B cell (primary cell): ENCODE measurements at regions of chrX and their contacts with region 1.

Region 1: DNA sequence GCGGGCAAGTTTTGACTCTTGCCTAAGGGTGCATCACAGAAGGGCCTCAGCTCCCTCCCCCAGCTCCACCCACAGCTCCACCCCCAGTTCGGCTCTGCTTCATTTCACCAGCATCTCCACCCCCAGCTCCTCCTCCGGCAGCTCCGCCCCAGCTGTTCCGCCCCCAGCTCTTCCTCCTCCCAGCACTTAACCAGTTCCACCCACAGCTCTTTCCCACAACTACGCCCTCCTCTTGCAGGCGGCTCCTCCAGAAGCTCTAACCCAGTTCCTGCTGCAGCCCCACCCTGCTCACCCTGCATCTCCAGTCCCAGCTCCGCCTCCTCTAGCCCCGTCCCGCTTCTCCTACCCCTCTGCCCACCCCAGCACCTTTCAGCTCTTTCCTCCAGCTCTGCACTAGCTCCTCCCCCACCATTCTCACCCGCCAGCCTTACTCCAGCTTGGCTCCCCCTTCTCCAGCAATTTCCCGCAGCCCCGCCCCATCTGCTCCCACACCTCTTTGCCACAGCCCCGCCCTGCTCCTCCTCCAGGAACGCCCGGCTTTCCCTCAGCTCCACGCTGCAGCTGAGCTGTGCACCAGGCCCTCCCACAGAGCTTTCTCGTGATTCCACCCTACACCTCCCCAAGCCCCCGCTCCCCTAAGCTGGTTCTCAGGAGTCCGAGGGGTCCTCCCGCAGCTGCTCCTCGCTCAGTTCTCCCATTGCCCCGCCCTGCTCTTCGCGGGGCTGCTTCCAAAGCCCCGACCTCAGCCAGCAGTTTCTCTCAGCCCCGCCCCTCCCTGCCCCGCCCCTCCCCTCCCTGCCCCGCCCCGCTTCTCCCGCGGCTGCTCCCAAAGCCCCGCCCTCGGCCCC is 1.3 kb upstream of the EOLA1 start:
- DNase-seq: peak; percentile 91
- ATAC-seq: peak; percentile 51
- H3K4me3 ChIP-seq: peak overlapping the region in 4 of 5 experiments; percentile 54 to 70 (median 60)
- H3K4me3 Mint-ChIP-seq: peak overlapping the region; percentile 89
- H3K27ac ChIP-seq: peak overlapping the region; percentile 64 to 73
- H3K27ac Mint-ChIP-seq: peak overlapping the region; percentile 89
- H3K4me1 ChIP-seq: peaks cover 6 to 13% of the 10 kb centered on the region in 2 donors
- H3K4me1 Mint-ChIP-seq: peaks cover 12% of the 10 kb centered on the region
- H3K27me3 ChIP-seq: no peaks in the 10 kb centered on the region
- H3K27me3 Mint-ChIP-seq: no peaks in the 10 kb centered on the region
- CTCF ChIP-seq: no peak

Region 2: GRCh38 chrX:148984238-148984637 is 555.3 kb before region 1 on chrX:
- CTCF ChIA-PET with region 1: no interaction called
- POLR2A ChIA-PET with region 1: no interaction called
- intact Hi-C with region 1: no loop called
- DNase-seq: no peak
- ATAC-seq: no peak
- H3K4me3 ChIP-seq: no peak overlapping the region
- H3K4me3 Mint-ChIP-seq: no peak overlapping the region
- H3K27ac ChIP-seq: no peak overlapping the region
- H3K27ac Mint-ChIP-seq: no peak overlapping the region
- H3K4me1 ChIP-seq: no peaks in the 10 kb centered on the region
- H3K4me1 Mint-ChIP-seq: peaks cover 3% of the 10 kb centered on the region
- H3K27me3 ChIP-seq: no peaks in the 10 kb centered on the region
- H3K27me3 Mint-ChIP-seq: no peaks in the 10 kb centered on the region
- CTCF ChIP-seq: no peak

Region 3: DNA sequence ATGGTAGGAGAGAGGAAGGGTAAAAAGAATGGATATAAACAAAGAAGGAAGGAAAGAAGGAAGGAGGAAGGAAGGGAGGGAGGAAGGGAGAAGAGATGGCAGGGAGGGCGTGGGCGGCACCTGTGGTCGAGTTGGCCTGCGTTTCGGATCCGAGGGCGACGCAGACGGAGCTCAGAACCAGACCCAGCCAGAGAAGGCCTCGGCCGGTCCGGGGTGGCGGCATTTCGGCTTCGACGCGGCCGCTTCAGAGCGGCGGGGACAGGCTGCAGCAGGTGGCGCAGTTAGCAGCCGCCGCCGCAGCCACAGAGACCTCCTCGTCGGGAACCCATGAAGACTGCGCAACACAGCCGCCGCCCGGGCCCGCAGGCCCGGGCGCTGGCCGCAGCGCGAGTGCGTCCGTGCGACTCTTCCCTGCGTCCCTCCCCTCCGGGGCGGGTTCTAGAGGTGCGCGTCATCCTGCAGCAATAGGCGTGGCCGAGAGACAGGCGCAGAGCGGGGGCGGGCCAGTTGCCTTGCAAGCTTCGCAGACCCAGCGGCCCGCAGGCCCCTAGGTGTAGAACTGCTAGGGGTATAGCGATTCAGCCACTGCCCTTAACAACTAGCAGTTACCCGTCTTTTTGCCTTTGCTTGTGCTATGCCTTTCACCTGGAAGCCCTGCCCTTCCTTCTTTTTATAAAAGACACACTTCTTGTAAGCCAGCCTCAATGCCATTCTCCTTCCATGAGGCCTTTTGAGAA is 34.4 kb before region 1 on chrX and contains the start of gene IDS:
- CTCF ChIA-PET with region 1: interaction called, 20 read pairs
- POLR2A ChIA-PET with region 1: interaction called, 27 read pairs
- intact Hi-C with region 1: loop called (anchors 1 kb)
- DNase-seq: peak; percentile 91
- ATAC-seq: peak; percentile 72
- H3K4me3 ChIP-seq: peak within 1 kb of the TSS; percentile 24 to 81 (median 79)
- H3K4me3 Mint-ChIP-seq: peak within 1 kb of the TSS; percentile 95
- H3K27ac ChIP-seq: peak within 1 kb of the TSS; percentile 95 to 98
- H3K27ac Mint-ChIP-seq: peak within 1 kb of the TSS; percentile 96
- H3K4me1 ChIP-seq: peaks cover 12 to 24% of the 10 kb centered on the region in 2 donors
- H3K4me1 Mint-ChIP-seq: peaks cover 18% of the 10 kb centered on the region
- H3K27me3 ChIP-seq: peaks cover 0 to 5% (median 0%) of the 10 kb centered on the region in 4 experiments
- H3K27me3 Mint-ChIP-seq: peaks cover 2% of the 10 kb centered on the region
- CTCF ChIP-seq: no peak
- total RNA-seq, gene IDS: 169 TPM in 2 replicates

Region 4: GRCh38 chrX:149512225-149512885 is 27.2 kb before region 1 on chrX:
- CTCF ChIA-PET with region 1: interaction called, 20 read pairs
- POLR2A ChIA-PET with region 1: interaction called, 3 read pairs
- intact Hi-C with region 1: no loop called
- DNase-seq: peak; percentile 68
- ATAC-seq: peak; percentile 93
- H3K4me3 ChIP-seq: no peak overlapping the region
- H3K4me3 Mint-ChIP-seq: no peak overlapping the region
- H3K27ac ChIP-seq: no peak overlapping the region
- H3K27ac Mint-ChIP-seq: no peak overlapping the region
- H3K4me1 ChIP-seq: no peaks in the 10 kb centered on the region
- H3K4me1 Mint-ChIP-seq: peaks cover 4% of the 10 kb centered on the region
- H3K27me3 ChIP-seq: peaks cover 0 to 5% (median 0%) of the 10 kb centered on the region in 4 experiments
- H3K27me3 Mint-ChIP-seq: peaks cover 2% of the 10 kb centered on the region
- CTCF ChIP-seq: peak; percentile 59

Region 5: DNA sequence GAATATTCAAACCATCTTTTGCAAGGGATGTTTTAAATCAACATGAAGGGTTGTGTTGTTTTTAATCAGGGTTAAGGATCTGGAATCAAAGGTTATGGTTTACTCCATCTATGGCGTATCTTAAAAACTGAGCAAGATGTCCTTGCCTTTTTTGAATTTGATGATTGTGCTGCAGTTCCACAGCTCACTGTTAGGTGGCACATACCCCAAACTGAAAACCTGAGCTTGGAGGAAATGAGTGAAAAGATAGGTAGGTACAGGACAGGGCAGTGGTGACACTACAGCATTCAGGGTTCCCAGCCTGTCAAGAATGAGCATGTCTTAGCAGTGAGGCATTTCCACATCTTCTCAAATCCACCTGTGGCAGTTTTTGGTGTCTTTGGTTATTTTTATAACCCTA is 11.8 kb before region 1 on chrX:
- CTCF ChIA-PET with region 1: interaction called, 12 read pairs
- POLR2A ChIA-PET with region 1: interaction called, 4 read pairs
- intact Hi-C with region 1: loop called (anchors 1 kb)
- DNase-seq: peak; percentile 56
- ATAC-seq: peak; percentile 25
- H3K4me3 ChIP-seq: no peak overlapping the region
- H3K4me3 Mint-ChIP-seq: peak overlapping the region; percentile 7
- H3K27ac ChIP-seq: no peak overlapping the region
- H3K27ac Mint-ChIP-seq: peak overlapping the region; percentile 44
- H3K4me1 ChIP-seq: peaks cover 4 to 10% of the 10 kb centered on the region in 2 donors
- H3K4me1 Mint-ChIP-seq: peaks cover 17% of the 10 kb centered on the region
- H3K27me3 ChIP-seq: no peaks in the 10 kb centered on the region
- H3K27me3 Mint-ChIP-seq: no peaks in the 10 kb centered on the region
- CTCF ChIP-seq: peak; percentile 50

Region 6: GRCh38 chrX:149938427-149939270 is 399.1 kb after region 1 on chrX and contains the start of gene EOLA2:
- CTCF ChIA-PET with region 1: interaction called, 11 read pairs
- POLR2A ChIA-PET with region 1: interaction called, 59 read pairs
- intact Hi-C with region 1: no loop called
- DNase-seq: peak; percentile 97
- ATAC-seq: peak; percentile 51
- H3K4me3 ChIP-seq: peak within 1 kb of the TSS; percentile 30 to 86 (median 72)
- H3K4me3 Mint-ChIP-seq: peak within 1 kb of the TSS; percentile 93
- H3K27ac ChIP-seq: peak within 1 kb of the TSS; percentile 94 to 98
- H3K27ac Mint-ChIP-seq: peak within 1 kb of the TSS; percentile 99
- H3K4me1 ChIP-seq: peaks cover 5 to 12% of the 10 kb centered on the region in 2 donors
- H3K4me1 Mint-ChIP-seq: peaks cover 4% of the 10 kb centered on the region
- H3K27me3 ChIP-seq: no peaks in the 10 kb centered on the region
- H3K27me3 Mint-ChIP-seq: no peaks in the 10 kb centered on the region
- CTCF ChIP-seq: peak; percentile 22
- total RNA-seq, gene EOLA2: 37.7 and 42.0 TPM in 2 replicates

Region 7: GRCh38 chrX:150934453-150934852 is 1394.9 kb after region 1 on chrX:
- CTCF ChIA-PET with region 1: no interaction called
- POLR2A ChIA-PET with region 1: no interaction called
- intact Hi-C with region 1: no loop called
- DNase-seq: no peak
- ATAC-seq: no peak
- H3K4me3 ChIP-seq: no peak overlapping the region
- H3K4me3 Mint-ChIP-seq: no peak overlapping the region
- H3K27ac ChIP-seq: no peak overlapping the region
- H3K27ac Mint-ChIP-seq: no peak overlapping the region
- H3K4me1 ChIP-seq: no peaks in the 10 kb centered on the region
- H3K4me1 Mint-ChIP-seq: no peaks in the 10 kb centered on the region
- H3K27me3 ChIP-seq: no peaks in the 10 kb centered on the region
- H3K27me3 Mint-ChIP-seq: no peaks in the 10 kb centered on the region
- CTCF ChIP-seq: no peak